ENCODE measurements at regions of chr5 and their contacts with region 1.

Region 1: GRCh38 chr5:153964880-153965645 is 73.6 kb downstream of the FAM114A2 start:
- ATAC-seq: peak; percentile 66 to 84 (median 80)
- H3K4me3 ChIP-seq: no peak overlapping the region
- H3K27ac ChIP-seq: no peak overlapping the region
- H3K4me1 ChIP-seq: peaks cover 8 to 9% of the 10 kb centered on the region in 2 donors

Region 2: GRCh38 chr5:152532714-152533113 is 1432.3 kb before region 1 on chr5:
- in situ Hi-C with region 1: loop called in 8 of 9 experiments (anchors 5 to 25 kb)
- ATAC-seq: peak; percentile 40 to 74 (median 59)
- H3K4me3 ChIP-seq: no peak overlapping the region
- H3K27ac ChIP-seq: no peak overlapping the region
- H3K4me1 ChIP-seq: peaks cover 6 to 13% of the 10 kb centered on the region in 2 donors

Region 3: DNA sequence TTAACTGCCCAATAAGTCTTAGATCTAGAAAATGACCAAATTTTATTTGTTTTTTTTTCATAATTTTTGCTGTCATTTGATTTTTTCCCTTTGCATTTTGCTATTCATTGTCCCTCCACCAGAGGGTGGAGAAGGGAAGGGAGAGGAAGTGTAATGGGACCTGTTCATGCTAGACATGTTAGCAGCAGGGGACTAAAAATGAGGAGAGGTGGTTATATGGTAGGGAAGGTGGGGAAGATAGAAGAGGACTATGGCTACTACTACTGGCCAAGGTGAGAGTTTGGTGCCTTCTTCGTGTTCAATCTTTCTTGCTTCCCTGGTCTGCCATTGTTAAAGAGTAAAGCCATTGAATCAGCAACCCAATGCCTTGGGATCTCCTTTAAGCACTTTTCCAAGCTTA is 468.2 kb before region 1 on chr5:
- in situ Hi-C with region 1: loop called in 3 of 9 experiments (anchors 25 kb)
- ATAC-seq: peak in 4 of 8 experiments; percentile 19 to 53 (median 35)
- H3K4me3 ChIP-seq: no peak overlapping the region
- H3K27ac ChIP-seq: no peak overlapping the region
- H3K4me1 ChIP-seq: peaks cover 32 to 64% of the 10 kb centered on the region in 2 donors

Region 4: DNA sequence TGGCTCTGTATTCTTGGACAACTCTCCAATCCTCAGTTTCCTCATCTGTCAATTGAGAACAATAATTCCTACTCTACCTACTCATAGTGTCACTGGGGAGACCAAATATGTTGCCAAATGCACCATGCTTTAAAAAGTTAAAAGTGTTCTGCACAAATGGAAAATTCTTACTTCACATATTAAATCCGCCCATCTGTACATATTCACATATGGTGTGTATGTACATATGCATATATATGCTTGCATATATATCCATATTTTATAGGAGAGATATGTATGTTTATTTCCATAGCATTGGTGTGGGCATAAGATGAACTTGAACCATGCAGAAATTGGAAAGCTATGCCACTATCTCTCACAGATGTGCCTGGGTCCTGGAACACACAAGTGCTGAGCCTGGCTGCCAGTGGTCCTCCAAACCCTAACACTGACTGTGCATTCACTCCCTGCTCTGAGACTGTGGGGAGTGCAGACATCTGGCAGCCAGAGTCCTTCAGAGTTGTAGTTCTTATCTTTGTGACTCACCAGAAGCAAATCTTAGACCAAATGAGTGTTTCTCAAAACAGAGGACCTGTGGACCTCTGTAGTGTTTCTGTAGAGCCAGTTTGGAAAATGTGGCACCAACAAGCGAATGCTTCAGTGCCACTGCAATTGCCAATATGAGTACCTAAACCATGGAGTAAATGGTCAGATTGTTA is 305.9 kb before region 1 on chr5:
- in situ Hi-C with region 1: loop called in 1 of 9 experiments (anchors 25 kb)
- ATAC-seq: peak in 4 of 8 experiments; percentile 20 to 88 (median 80)
- H3K4me3 ChIP-seq: no peak overlapping the region
- H3K27ac ChIP-seq: no peak overlapping the region
- H3K4me1 ChIP-seq: peaks cover 10 to 14% of the 10 kb centered on the region in 2 donors

Region 5: GRCh38 chr5:154647114-154647760 is 682.2 kb after region 1 on chr5:
- in situ Hi-C with region 1: loop called in 1 of 9 experiments (anchors 25 kb)
- ATAC-seq: peak in 4 of 8 experiments; percentile 50 to 67 (median 62)
- H3K4me3 ChIP-seq: no peak overlapping the region
- H3K27ac ChIP-seq: no peak overlapping the region
- H3K4me1 ChIP-seq: no peaks in the 10 kb centered on the region

Measured in motor neuron (in vitro differentiated cells).